Naive thymus-derived CD4-positive, alpha-beta T cell (primary cell): ENCODE measurements at regions of chr5 and their contacts with region 1.

Region 1: DNA sequence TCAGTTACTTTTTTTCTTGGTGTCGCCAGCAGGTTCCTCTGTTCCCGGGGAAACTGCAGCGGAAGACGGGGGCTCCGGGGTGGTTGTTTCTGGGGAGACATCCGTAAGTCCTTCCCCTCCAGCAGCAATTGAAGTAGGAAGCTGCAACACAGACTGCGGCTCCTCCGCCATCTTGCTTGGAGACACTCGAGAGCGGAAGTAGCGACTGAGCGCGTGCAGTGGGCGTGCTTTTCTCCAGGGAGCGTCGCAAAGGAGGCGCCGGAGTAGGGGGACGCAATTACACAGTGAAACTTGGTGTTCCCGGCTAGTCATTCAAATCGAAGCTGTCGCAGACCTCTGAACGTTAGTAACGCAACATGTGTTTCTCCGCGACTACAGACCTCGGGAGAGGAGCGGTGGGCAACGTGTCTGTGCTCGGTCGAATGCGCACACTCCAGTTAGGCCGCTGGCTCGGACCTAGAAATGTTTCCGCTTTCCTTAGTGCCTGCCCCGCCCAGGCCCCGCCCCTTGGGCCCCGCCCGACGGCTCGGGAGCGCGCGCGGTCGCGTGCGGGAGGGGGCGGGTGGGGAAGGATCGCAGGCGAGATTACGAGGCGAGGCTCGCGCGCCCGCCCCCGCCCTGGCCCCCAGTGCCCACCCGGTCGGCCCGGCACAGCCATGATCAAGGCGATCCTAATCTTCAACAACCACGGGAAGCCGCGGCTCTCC is at the starts of genes AP3S1 and ATG12:
- DNase-seq: peak; percentile 89 to 96 (median 94)
- ATAC-seq: peak; percentile 92
- H3K4me3 ChIP-seq: peak within 1 kb of the TSS; percentile 81
- H3K4me3 Mint-ChIP-seq: peak within 1 kb of the TSS; percentile 97 to 100 (median 99)
- H3K27ac ChIP-seq: peak within 1 kb of the TSS; percentile 83
- H3K27ac Mint-ChIP-seq: peak within 1 kb of the TSS; percentile 97 to 100 (median 99)
- H3K4me1 ChIP-seq: peaks cover 36 to 37% of the 10 kb centered on the region in 2 donors
- H3K4me1 Mint-ChIP-seq: peaks cover 34 to 83% (median 61%) of the 10 kb centered on the region in 7 donors
- H3K27me3 ChIP-seq: no peaks in the 10 kb centered on the region
- H3K27me3 Mint-ChIP-seq: peaks cover 0 to 7% (median 0%) of the 10 kb centered on the region in 5 donors
- total RNA-seq, gene AP3S1: 22.2 to 55.2 (median 43.3) TPM
- total RNA-seq, gene ATG12: 47.9 to 84.9 (median 60.0) TPM

Region 2: GRCh38 chr5:115209279-115209678 is 632.3 kb before region 1 on chr5:
- CTCF ChIA-PET with region 1: no interaction called
- POLR2A ChIA-PET with region 1: no interaction called
- intact Hi-C with region 1: loop called in 1 of 2 experiments (anchors 1 kb)
- DNase-seq: peak in 8 of 9 donors; percentile 1 to 45 (median 15)
- ATAC-seq: peak; percentile 97
- H3K4me3 ChIP-seq: no peak overlapping the region
- H3K4me3 Mint-ChIP-seq: peak overlapping the region in 1 of 10 donors; percentile 77
- H3K27ac ChIP-seq: no peak overlapping the region
- H3K27ac Mint-ChIP-seq: peak overlapping the region in 3 of 9 donors; percentile 6 to 74 (median 62)
- H3K4me1 ChIP-seq: no peaks in the 10 kb centered on the region
- H3K4me1 Mint-ChIP-seq: peaks cover 5 to 19% (median 12%) of the 10 kb centered on the region in 7 donors
- H3K27me3 ChIP-seq: no peaks in the 10 kb centered on the region
- H3K27me3 Mint-ChIP-seq: no peaks in the 10 kb centered on the region

Region 3: GRCh38 chr5:115309751-115310370 is 531.7 kb before region 1 on chr5:
- CTCF ChIA-PET with region 1: interaction called, 3 read pairs
- POLR2A ChIA-PET with region 1: no interaction called
- intact Hi-C with region 1: loop called (anchors 1 to 2 kb)
- DNase-seq: peak in 6 of 9 donors; percentile 10 to 56 (median 46)
- ATAC-seq: peak; percentile 76
- H3K4me3 ChIP-seq: no peak overlapping the region
- H3K4me3 Mint-ChIP-seq: no peak overlapping the region
- H3K27ac ChIP-seq: no peak overlapping the region
- H3K27ac Mint-ChIP-seq: no peak overlapping the region
- H3K4me1 ChIP-seq: no peaks in the 10 kb centered on the region
- H3K4me1 Mint-ChIP-seq: no peaks in the 10 kb centered on the region
- H3K27me3 ChIP-seq: no peaks in the 10 kb centered on the region
- H3K27me3 Mint-ChIP-seq: peaks cover 19 to 47% (median 27%) of the 10 kb centered on the region in 5 donors

Region 4: DNA sequence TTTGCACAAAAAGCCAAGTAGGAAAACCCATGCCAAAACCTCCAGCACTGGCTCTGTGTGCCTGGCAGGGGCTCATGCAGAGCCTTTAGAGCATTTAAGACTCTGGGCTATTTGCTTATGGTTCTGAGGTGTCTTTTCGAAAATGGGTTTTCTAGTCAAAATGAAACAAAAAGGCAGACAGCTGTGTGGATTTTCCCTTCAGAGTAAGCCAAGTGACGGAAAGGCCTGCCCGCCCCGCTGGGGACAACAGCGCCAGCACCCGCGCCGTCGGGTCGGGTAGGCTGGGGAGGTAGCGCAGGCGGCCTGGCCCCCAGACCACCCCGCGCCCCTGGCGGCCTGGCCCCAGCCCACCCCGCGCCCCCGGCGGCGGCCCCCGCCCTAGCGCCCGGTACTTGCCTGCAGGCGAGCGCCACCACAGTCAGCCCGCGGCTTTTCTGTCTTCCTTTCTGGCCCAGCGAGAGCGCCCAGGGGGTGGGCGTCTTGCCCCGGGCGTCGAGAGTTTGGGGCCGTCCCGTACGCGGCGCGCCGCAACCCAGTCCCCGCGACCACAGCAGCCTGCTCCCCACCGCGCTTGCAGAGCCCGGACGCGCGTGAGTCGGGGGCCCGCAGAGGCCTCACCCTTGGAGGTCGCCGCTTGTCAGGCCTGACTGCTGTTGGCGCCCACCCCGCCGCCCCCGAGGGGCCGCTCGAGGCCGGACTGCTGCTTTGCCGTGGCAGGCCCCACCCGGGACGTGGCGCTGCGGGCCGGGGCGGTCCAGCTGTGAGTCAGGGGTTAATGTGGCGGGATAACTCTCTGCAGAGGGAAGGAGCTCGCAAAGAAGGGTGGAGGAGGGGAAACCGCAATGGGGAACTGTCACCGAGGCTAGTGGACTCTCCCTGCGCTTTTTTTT is 239.6 kb before region 1 on chr5 and contains the start of gene TICAM2:
- CTCF ChIA-PET with region 1: no interaction called
- POLR2A ChIA-PET with region 1: interaction called, 5 read pairs
- intact Hi-C with region 1: loop called (anchors 1 kb)
- DNase-seq: peak; percentile 39 to 74 (median 56)
- ATAC-seq: peak; percentile 84
- H3K4me3 ChIP-seq: peak within 1 kb of the TSS; percentile 63
- H3K4me3 Mint-ChIP-seq: peak within 1 kb of the TSS; percentile 71 to 89 (median 84)
- H3K27ac ChIP-seq: peak within 1 kb of the TSS; percentile 72
- H3K27ac Mint-ChIP-seq: peak within 1 kb of the TSS; percentile 69 to 94 (median 84)
- H3K4me1 ChIP-seq: no peaks in the 10 kb centered on the region
- H3K4me1 Mint-ChIP-seq: peaks cover 19 to 41% (median 32%) of the 10 kb centered on the region in 7 donors
- H3K27me3 ChIP-seq: no peaks in the 10 kb centered on the region
- H3K27me3 Mint-ChIP-seq: no peaks in the 10 kb centered on the region
- total RNA-seq, gene TICAM2: 0.93 to 3.7 (median 1.9) TPM

Region 5: GRCh38 chr5:115831163-115831768 is 10.3 kb before region 1 on chr5:
- CTCF ChIA-PET with region 1: interaction called, 5 read pairs
- POLR2A ChIA-PET with region 1: interaction called, 4 read pairs
- intact Hi-C with region 1: loop called (anchors 1 kb)
- DNase-seq: peak in 5 of 9 donors; percentile 17 to 36 (median 30)
- ATAC-seq: peak; percentile 87
- H3K4me3 ChIP-seq: no peak overlapping the region
- H3K4me3 Mint-ChIP-seq: no peak overlapping the region
- H3K27ac ChIP-seq: no peak overlapping the region
- H3K27ac Mint-ChIP-seq: peak overlapping the region in 4 of 9 donors; percentile 0 to 77 (median 8)
- H3K4me1 ChIP-seq: no peaks in the 10 kb centered on the region
- H3K4me1 Mint-ChIP-seq: peaks cover 5 to 29% (median 18%) of the 10 kb centered on the region in 7 donors
- H3K27me3 ChIP-seq: no peaks in the 10 kb centered on the region
- H3K27me3 Mint-ChIP-seq: peaks cover 0 to 1% (median 0%) of the 10 kb centered on the region in 5 donors

Region 6: GRCh38 chr5:115948091-115948534 is 106.6 kb after region 1 on chr5:
- CTCF ChIA-PET with region 1: no interaction called
- POLR2A ChIA-PET with region 1: no interaction called
- intact Hi-C with region 1: no loop called
- DNase-seq: no peak
- ATAC-seq: no peak
- H3K4me3 ChIP-seq: no peak overlapping the region
- H3K4me3 Mint-ChIP-seq: no peak overlapping the region
- H3K27ac ChIP-seq: no peak overlapping the region
- H3K27ac Mint-ChIP-seq: no peak overlapping the region
- H3K4me1 ChIP-seq: no peaks in the 10 kb centered on the region
- H3K4me1 Mint-ChIP-seq: no peaks in the 10 kb centered on the region
- H3K27me3 ChIP-seq: peaks cover 0 to 3% of the 10 kb centered on the region in 2 donors
- H3K27me3 Mint-ChIP-seq: peaks cover 11 to 26% (median 14%) of the 10 kb centered on the region in 5 donors